MCF 10A (cell line): ENCODE measurements at regions of chr2 and their contacts with region 1.

Region 1: DNA sequence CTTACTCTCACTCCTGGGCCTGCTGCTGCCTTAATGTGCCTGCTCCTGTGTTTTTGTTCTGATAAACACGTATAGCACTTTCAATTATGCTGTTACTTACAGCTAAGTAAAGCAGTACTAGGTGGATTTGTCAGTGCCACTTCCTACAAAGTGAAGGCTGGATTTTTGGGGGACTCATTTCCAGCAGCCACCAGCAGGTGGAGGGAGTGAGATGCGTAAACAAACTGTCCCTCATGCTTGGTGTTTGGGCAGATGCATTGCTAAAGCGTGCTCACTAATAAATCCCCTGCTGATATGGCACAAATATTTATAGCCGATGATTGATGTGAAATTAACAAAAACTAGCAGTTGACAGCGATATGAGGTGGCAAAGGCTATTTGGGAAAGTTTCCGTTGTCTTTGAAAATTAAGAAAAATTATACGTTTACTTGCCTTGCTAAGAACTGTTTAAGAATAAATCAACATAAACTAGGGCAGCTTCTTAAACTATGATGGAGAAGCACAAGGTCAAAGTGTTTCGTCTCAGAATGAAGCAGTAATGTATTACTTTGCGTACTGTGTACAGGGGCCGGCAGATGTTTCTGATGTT is 101.7 kb downstream of the AGAP1 start:
- DNase-seq: peak; percentile 76
- H3K4me3 Mint-ChIP-seq: no peak overlapping the region
- H3K27ac Mint-ChIP-seq: no peak overlapping the region
- H3K4me1 Mint-ChIP-seq: peaks cover 16% of the 10 kb centered on the region
- H3K27me3 Mint-ChIP-seq: no peaks in the 10 kb centered on the region
- CTCF ChIP-seq: peak; percentile 76

Region 2: GRCh38 chr2:235116885-235117492 is 478.5 kb before region 1 on chr2:
- CTCF ChIA-PET with region 1: interaction called, 5 read pairs
- POLR2A ChIA-PET with region 1: no interaction called
- intact Hi-C with region 1: loop called (anchors 5 kb)
- DNase-seq: peak; percentile 50
- H3K4me3 Mint-ChIP-seq: no peak overlapping the region
- H3K27ac Mint-ChIP-seq: no peak overlapping the region
- H3K4me1 Mint-ChIP-seq: no peaks in the 10 kb centered on the region
- H3K27me3 Mint-ChIP-seq: peaks cover 27% of the 10 kb centered on the region
- CTCF ChIP-seq: peak; percentile 60

Region 3: GRCh38 chr2:235142601-235143000 is 452.9 kb before region 1 on chr2:
- CTCF ChIA-PET with region 1: interaction called, 185 read pairs
- POLR2A ChIA-PET with region 1: interaction called, 15 read pairs
- intact Hi-C with region 1: no loop called
- DNase-seq: peak; percentile 28
- H3K4me3 Mint-ChIP-seq: no peak overlapping the region
- H3K27ac Mint-ChIP-seq: no peak overlapping the region
- H3K4me1 Mint-ChIP-seq: no peaks in the 10 kb centered on the region
- H3K27me3 Mint-ChIP-seq: peaks cover 66% of the 10 kb centered on the region
- CTCF ChIP-seq: no peak

Region 4: GRCh38 chr2:235493775-235494715 is 101.5 kb before region 1 on chr2 and contains the start of gene AGAP1:
- CTCF ChIA-PET with region 1: interaction called, 7 read pairs
- POLR2A ChIA-PET with region 1: interaction called, 4 read pairs
- intact Hi-C with region 1: loop called (anchors 1 kb)
- DNase-seq: peak; percentile 83
- H3K4me3 Mint-ChIP-seq: peak within 1 kb of the TSS; percentile 77
- H3K27ac Mint-ChIP-seq: no peak within 1 kb of the TSS
- H3K4me1 Mint-ChIP-seq: peaks cover 16% of the 10 kb centered on the region
- H3K27me3 Mint-ChIP-seq: no peaks in the 10 kb centered on the region
- CTCF ChIP-seq: no peak
- total RNA-seq, gene AGAP1: 41.3 and 42.4 TPM in 2 replicates

Region 5: DNA sequence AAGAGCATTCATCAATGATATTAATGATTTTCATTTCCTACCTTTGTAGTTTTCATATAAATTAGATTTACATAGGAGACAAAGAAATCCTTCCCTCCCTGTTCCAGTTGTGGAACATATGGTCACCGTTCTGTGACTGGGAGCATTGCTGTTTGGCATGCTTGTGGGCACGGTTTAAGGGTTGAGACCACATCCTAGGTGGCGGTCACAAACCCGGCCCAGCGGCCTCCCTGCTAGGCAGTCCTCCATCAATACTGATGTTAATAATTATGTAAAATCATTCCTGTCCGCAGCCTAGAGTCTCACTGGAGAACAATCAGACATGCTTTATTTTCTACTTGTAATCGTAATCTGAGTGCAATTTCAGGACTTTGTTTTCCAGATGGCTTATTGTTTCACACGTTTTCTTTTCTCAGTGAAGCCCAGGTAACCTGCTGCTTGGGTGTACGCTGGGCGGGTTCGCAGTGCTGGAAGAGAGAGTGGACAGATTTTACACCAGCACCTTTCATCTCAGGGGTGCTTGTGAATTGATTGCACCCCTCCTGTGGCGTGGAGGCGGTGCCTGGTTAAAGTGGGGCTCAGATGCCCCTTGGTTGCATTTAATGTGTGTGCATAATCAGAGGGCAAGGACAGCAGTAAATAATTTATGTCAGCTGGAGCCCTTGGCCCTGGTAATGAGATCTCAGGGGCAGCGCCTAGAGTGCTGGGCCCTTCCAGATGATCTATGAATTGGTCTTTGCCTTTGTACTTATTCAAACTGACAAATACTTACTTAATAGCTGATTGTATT is 16.4 kb after region 1 on chr2:
- CTCF ChIA-PET with region 1: interaction called, 15 read pairs
- POLR2A ChIA-PET with region 1: no interaction called
- intact Hi-C with region 1: no loop called
- DNase-seq: no peak
- H3K4me3 Mint-ChIP-seq: no peak overlapping the region
- H3K27ac Mint-ChIP-seq: no peak overlapping the region
- H3K4me1 Mint-ChIP-seq: peaks cover 7% of the 10 kb centered on the region
- H3K27me3 Mint-ChIP-seq: no peaks in the 10 kb centered on the region
- CTCF ChIP-seq: no peak

Region 6: GRCh38 chr2:235675678-235676535 is 80.4 kb after region 1 on chr2:
- CTCF ChIA-PET with region 1: interaction called, 29 read pairs
- POLR2A ChIA-PET with region 1: no interaction called
- intact Hi-C with region 1: no loop called
- DNase-seq: peak; percentile 15
- H3K4me3 Mint-ChIP-seq: peak overlapping the region; percentile 34
- H3K27ac Mint-ChIP-seq: peak overlapping the region; percentile 65
- H3K4me1 Mint-ChIP-seq: peaks cover 64% of the 10 kb centered on the region
- H3K27me3 Mint-ChIP-seq: no peaks in the 10 kb centered on the region
- CTCF ChIP-seq: no peak

Region 7: DNA sequence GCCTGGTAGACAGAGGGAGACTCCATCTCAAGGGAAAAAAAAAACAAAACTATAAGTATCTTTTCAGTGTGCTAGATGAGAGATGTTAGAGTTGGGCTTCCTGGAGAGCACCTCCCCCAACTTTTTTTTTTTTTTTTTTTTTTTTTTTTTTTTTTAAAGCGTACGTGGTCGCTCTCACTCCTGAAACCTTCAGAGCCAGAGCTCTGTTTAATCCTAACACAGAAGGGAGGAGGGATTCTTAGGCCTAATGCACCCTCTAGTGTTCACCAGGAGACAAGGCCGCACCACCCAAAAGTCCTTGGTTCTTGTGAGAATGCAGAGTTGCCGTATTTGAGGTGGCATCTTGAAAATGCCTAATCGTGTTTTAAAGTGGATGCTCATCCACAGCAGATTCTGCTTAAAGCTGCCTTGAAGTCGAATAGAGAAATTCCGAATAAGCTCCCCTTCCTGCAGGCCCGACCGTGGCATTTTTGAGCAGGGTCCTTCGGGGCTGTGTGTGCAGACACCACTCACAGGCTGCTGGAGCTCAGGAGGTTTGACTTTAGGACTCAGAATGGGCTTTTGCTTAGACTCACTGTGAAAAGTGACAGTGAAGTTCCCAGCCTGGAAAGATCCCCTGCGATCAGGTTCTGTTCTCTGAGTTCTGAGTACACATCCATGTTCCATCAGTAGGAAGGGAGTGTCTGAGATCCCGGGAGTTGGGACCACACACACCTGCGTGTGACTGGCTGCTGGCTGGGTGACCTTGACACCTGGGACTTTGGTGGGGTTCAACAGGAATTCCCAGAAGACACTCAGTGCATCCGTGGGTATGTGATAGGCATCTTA is 151.0 kb after region 1 on chr2:
- CTCF ChIA-PET with region 1: interaction called, 240 read pairs
- POLR2A ChIA-PET with region 1: interaction called, 36 read pairs
- intact Hi-C with region 1: loop called (anchors 1 kb)
- DNase-seq: peak; percentile 90
- H3K4me3 Mint-ChIP-seq: peak overlapping the region; percentile 72
- H3K27ac Mint-ChIP-seq: peak overlapping the region; percentile 93
- H3K4me1 Mint-ChIP-seq: peaks cover 42% of the 10 kb centered on the region
- H3K27me3 Mint-ChIP-seq: no peaks in the 10 kb centered on the region
- CTCF ChIP-seq: peak; percentile 74